Activated CD4-positive, alpha-beta memory T cell treated with anti-CD3 and anti-CD28 coated beads for 36 hours (primary cell): ENCODE measurements at regions of chr14 and their contacts with region 1.

Region 1: GRCh38 chr14:61598980-61599379 is 96.3 kb upstream of the HIF1A start:
- DNase-seq: peak; percentile 54
- H3K4me3 Mint-ChIP-seq: no peak overlapping the region
- H3K27ac Mint-ChIP-seq: peak overlapping the region; percentile 65
- H3K4me1 Mint-ChIP-seq: peaks cover 48% of the 10 kb centered on the region
- H3K27me3 Mint-ChIP-seq: no peaks in the 10 kb centered on the region

Region 2: GRCh38 chr14:61503167-61503801 is 95.7 kb before region 1 on chr14:
- CTCF ChIA-PET with region 1: no interaction called
- POLR2A ChIA-PET with region 1: interaction called, 3 read pairs
- intact Hi-C with region 1: loop called (anchors 1 kb)
- DNase-seq: peak; percentile 90
- H3K4me3 Mint-ChIP-seq: peak overlapping the region; percentile 62
- H3K27ac Mint-ChIP-seq: peak overlapping the region; percentile 98
- H3K4me1 Mint-ChIP-seq: peaks cover 98% of the 10 kb centered on the region
- H3K27me3 Mint-ChIP-seq: no peaks in the 10 kb centered on the region

Region 3: GRCh38 chr14:61525293-61526011 is 73.5 kb before region 1 on chr14:
- CTCF ChIA-PET with region 1: no interaction called
- POLR2A ChIA-PET with region 1: interaction called, 3 read pairs
- intact Hi-C with region 1: loop called (anchors 1 kb)
- DNase-seq: peak; percentile 92
- H3K4me3 Mint-ChIP-seq: peak overlapping the region; percentile 63
- H3K27ac Mint-ChIP-seq: peak overlapping the region; percentile 91
- H3K4me1 Mint-ChIP-seq: peaks cover 88% of the 10 kb centered on the region
- H3K27me3 Mint-ChIP-seq: no peaks in the 10 kb centered on the region

Region 4: GRCh38 chr14:61568572-61569131 is 30.3 kb before region 1 on chr14:
- CTCF ChIA-PET with region 1: interaction called, 4 read pairs
- POLR2A ChIA-PET with region 1: interaction called, 3 read pairs
- intact Hi-C with region 1: loop called (anchors 1 kb)
- DNase-seq: peak; percentile 72
- H3K4me3 Mint-ChIP-seq: peak overlapping the region; percentile 66
- H3K27ac Mint-ChIP-seq: peak overlapping the region; percentile 71
- H3K4me1 Mint-ChIP-seq: peaks cover 78% of the 10 kb centered on the region
- H3K27me3 Mint-ChIP-seq: no peaks in the 10 kb centered on the region

Region 5: DNA sequence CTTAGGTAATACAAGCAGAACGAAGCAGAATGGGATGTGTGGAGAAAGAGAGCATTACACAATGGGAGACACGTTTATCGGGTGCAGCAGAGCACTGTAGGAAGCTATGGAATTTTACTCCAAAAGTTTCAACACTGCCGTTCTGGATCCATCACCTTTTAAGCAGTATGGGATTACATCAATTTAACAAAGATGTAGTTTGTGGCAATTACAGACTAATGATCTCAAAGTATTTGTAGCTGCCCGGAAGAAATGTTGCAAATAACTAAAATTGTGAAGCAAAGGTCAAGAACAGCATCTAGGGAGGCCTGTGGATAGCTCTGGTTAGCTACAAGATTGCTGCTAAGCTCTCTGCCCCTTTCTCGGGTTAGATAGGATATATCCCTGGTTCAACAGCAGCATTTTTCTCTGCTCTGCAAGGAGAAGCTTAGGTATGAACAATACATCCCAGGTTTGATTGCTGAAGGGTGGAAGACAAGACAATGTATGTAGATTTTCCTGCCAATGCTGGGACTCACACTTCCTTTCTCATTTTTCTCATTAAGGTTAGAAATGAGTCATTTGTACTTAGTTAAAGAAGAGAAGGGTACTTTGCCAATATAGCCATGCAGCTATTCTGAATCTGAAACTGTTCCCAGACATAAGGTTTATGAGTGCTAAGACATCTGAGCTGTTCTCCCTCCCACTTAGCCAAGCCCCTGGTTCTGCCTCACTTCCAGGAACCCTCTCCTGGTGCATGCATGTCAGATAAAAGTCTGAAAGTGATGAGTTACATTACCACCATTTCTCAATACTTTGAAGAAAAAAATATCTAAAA is 21.4 kb after region 1 on chr14:
- CTCF ChIA-PET with region 1: no interaction called
- POLR2A ChIA-PET with region 1: interaction called, 3 read pairs
- intact Hi-C with region 1: loop called (anchors 1 kb)
- DNase-seq: peak; percentile 79
- H3K4me3 Mint-ChIP-seq: no peak overlapping the region
- H3K27ac Mint-ChIP-seq: peak overlapping the region; percentile 67
- H3K4me1 Mint-ChIP-seq: peaks cover 65% of the 10 kb centered on the region
- H3K27me3 Mint-ChIP-seq: no peaks in the 10 kb centered on the region

Region 6: GRCh38 chr14:61703342-61704129 is 104.6 kb after region 1 on chr14:
- CTCF ChIA-PET with region 1: no interaction called
- POLR2A ChIA-PET with region 1: no interaction called
- intact Hi-C with region 1: loop called (anchors 1 kb)
- DNase-seq: no peak
- H3K4me3 Mint-ChIP-seq: peak overlapping the region; percentile 57
- H3K27ac Mint-ChIP-seq: peak overlapping the region; percentile 79
- H3K4me1 Mint-ChIP-seq: peaks cover 86% of the 10 kb centered on the region
- H3K27me3 Mint-ChIP-seq: no peaks in the 10 kb centered on the region